ENCODE measurements at regions of chr1 and their contacts with region 1.

Region 1: GRCh38 chr1:53502641-53503432 is 43.6 kb downstream of the DMRTB1 start:
- DNase-seq: no peak
- H3K4me3 ChIP-seq: no peak overlapping the region
- H3K27ac ChIP-seq: no peak overlapping the region
- H3K4me1 ChIP-seq: peaks cover 0 to 6% (median 5%) of the 10 kb centered on the region in 4 donors
- H3K27me3 ChIP-seq: peaks cover 21% of the 10 kb centered on the region
- CTCF ChIP-seq: no peak
- EP300 ChIP-seq: no peak
- POLR2A ChIP-seq: no peak

Region 2: DNA sequence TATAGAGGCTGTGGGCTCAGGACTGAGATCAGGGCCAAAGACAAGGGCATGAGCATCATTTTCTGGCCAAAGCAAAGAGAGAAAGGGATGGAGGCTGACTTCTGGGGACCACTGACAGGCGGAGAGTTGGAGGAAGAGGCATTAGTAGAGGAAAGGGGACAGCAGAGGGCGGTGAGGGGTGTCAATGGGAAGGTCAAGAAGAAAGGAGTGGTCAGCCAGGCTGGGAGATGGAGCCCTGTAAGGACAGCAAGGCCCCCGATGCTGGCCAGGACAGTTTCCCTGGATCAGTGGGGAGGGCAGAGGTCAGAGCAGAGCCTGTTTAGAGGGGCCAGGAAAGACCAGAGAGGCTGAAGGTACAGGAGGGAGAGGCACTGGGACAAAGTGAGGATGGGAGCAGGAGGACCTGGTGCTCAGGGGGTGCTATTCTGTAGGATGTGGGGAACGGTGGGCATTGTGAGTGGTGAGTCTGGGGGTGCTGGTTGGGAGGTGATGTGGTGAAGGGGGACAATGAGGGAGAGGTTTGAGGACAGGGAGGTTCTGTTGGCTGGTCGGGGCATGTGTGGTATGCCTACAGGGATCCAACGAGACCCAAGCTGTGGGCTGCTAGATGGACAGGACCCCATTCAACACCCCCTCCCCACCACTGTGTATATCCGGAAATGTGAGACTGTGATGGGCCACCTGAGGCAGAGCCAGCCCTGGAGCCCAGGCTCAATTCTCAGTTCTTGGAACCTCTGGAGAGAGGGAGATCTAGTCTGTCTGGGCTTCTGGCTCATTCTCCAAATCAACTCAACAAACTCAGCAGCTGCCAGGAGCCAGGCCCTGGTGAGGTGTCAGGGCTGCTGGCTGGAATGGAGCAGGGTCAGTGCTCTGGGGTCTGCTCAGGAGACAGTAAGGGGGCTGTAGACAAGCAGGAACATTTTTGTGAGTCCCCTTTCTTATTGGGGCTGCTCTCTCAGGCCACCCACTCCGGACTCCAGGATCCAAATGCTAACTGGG is 1121.9 kb after region 1 on chr1:
- in situ Hi-C with region 1: no loop called
- intact Hi-C with region 1: loop called (anchors 5 kb)
- DNase-seq: no peak
- H3K4me3 ChIP-seq: no peak overlapping the region
- H3K27ac ChIP-seq: no peak overlapping the region
- H3K4me1 ChIP-seq: peaks cover 0 to 10% (median 3%) of the 10 kb centered on the region in 4 donors
- H3K27me3 ChIP-seq: no peaks in the 10 kb centered on the region
- CTCF ChIP-seq: no peak
- EP300 ChIP-seq: no peak
- POLR2A ChIP-seq: no peak